ENCODE measurements at regions of chr5 and their contacts with region 1.

Region 1: DNA sequence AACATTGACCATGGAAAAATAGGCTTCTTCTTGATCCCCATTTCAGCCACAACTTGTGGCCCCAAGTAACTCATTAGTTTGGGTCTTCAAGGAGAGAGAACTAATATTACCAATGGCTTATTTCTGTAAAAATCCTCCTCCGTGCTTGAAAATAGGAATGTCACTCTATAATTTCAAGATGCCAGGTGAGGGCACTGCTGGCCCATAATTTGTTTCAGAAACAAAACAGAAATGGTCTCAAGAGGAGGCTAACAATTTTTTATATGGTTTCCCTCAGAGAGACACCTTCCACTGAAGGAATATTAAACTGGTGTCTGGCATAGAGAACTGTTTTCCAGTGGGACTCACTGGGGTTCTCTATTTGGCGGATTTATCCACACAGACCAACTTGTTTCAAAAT is 437.0 kb upstream of the TRPC7 start:
- DNase-seq: peak in 4 of 10 donors; percentile 17 to 49 (median 42)
- H3K4me3 ChIP-seq: no peak overlapping the region
- H3K27ac ChIP-seq: no peak overlapping the region
- H3K27me3 ChIP-seq: no peaks in the 10 kb centered on the region
- CTCF ChIP-seq: peak; percentile 15 to 73 (median 56)

Region 2: DNA sequence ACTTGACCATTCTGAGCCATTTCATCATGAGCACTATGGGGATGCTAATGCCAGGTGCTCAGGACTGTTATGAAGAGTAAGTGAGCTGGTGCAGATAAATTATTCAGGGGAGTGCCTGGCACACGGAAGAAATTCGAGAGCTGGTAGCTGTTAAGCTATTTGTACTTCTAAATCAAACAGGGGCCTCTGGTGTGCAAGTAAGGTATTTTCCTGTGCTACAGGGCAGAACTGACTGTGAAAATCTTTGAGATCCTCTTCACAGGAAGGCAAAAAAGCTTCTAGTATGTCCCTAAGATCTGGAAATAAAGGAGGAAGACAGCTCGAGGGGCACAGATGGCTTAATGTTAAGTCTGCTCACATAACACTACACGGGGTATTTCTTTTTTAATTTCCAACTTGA is 803.0 kb after region 1 on chr5:
- intact Hi-C with region 1: loop called in 1 of 2 experiments (anchors 10 kb)
- DNase-seq: peak in 2 of 10 donors; percentile 36 to 58
- H3K4me3 ChIP-seq: no peak overlapping the region
- H3K27ac ChIP-seq: no peak overlapping the region
- H3K27me3 ChIP-seq: no peaks in the 10 kb centered on the region
- CTCF ChIP-seq: peak in 37 of 56 donors; percentile 11 to 51 (median 37)

Measured in dorsolateral prefrontal cortex (tissue), 120 donors.